ENCODE measurements at regions of chr5 and their contacts with region 1.

Region 1: GRCh38 chr5:150436141-150436680 is 13.3 kb downstream of the RPS14 start:
- DNase-seq: peak; percentile 71
- ATAC-seq: peak; percentile 83
- H3K4me3 ChIP-seq: no peak overlapping the region
- H3K27ac ChIP-seq: no peak overlapping the region
- H3K4me1 ChIP-seq: peaks cover 9% of the 10 kb centered on the region
- H3K27me3 ChIP-seq: no peaks in the 10 kb centered on the region; a peak in 1 of 5 replicates
- CTCF ChIP-seq: peak; percentile 95
- EP300 ChIP-seq: no peak
- POLR2A ChIP-seq: no peak
- RAD21 ChIP-seq: peak; percentile 89

Region 2: DNA sequence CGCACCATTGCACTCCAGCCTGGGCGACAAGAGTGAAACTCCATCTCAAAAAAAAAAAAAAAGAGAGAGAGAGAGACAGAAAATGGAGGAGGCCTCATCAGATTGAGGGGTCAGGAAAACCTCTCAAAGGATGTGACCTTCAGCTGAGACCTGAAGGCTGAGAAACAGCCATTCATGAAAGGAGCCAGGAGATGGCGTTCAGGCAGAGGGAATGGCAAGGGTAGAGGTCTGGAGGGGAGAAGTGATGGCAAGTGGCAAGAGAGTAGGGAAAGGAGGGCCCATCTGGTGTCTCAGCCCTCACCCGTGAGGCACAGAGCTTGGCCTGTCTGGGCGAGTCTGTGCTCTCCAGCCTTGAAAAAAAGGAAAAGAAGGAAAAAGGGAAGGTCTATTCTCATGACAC is 163.7 kb before region 1 on chr5:
- CTCF ChIA-PET with region 1: no interaction called
- POLR2A ChIA-PET with region 1: no interaction called
- in situ Hi-C with region 1: loop called (anchors 5 kb)
- intact Hi-C with region 1: loop called (anchors 5 kb)
- DNase-seq: peak; percentile 55
- ATAC-seq: peak; percentile 86
- H3K4me3 ChIP-seq: no peak overlapping the region
- H3K27ac ChIP-seq: no peak overlapping the region
- H3K4me1 ChIP-seq: peaks cover 21% of the 10 kb centered on the region
- H3K27me3 ChIP-seq: peaks cover 3 to 34% of the 10 kb centered on the region in 2 experiments; a peak in 4 of 5 replicates
- CTCF ChIP-seq: peak; percentile 88
- EP300 ChIP-seq: no peak
- POLR2A ChIP-seq: no peak
- RAD21 ChIP-seq: peak; percentile 70

Region 3: GRCh38 chr5:150357326-150358260 is 78.6 kb before region 1 on chr5 and contains the start of gene TCOF1:
- CTCF ChIA-PET with region 1: no interaction called
- POLR2A ChIA-PET with region 1: interaction called, 3 read pairs
- in situ Hi-C with region 1: no loop called
- intact Hi-C with region 1: loop called (anchors 5 kb)
- DNase-seq: peak; percentile 90
- ATAC-seq: peak; percentile 93
- H3K4me3 ChIP-seq: peak within 1 kb of the TSS; percentile 80 to 100 (median 84)
- H3K27ac ChIP-seq: peak within 1 kb of the TSS; percentile 72
- H3K4me1 ChIP-seq: peaks cover 74% of the 10 kb centered on the region
- H3K27me3 ChIP-seq: no peaks in the 10 kb centered on the region; a peak in 1 of 5 replicates
- CTCF ChIP-seq: no peak
- EP300 ChIP-seq: no peak
- POLR2A ChIP-seq: peak in 1 of 2 experiments; percentile 62; a peak in 3 of 4 replicates
- RAD21 ChIP-seq: peak; percentile 14; the same call in 1 of the 2 replicates
- total RNA-seq, gene TCOF1: 41.6 and 44.5 TPM in 2 replicates

Region 4: GRCh38 chr5:150398722-150399523 is 37.3 kb before region 1 on chr5:
- CTCF ChIA-PET with region 1: interaction called, 27 read pairs
- POLR2A ChIA-PET with region 1: no interaction called
- in situ Hi-C with region 1: loop called (anchors 5 kb)
- intact Hi-C with region 1: loop called (anchors 1 kb)
- DNase-seq: no peak
- ATAC-seq: peak; percentile 71
- H3K4me3 ChIP-seq: no peak overlapping the region
- H3K27ac ChIP-seq: no peak overlapping the region
- H3K4me1 ChIP-seq: no peaks in the 10 kb centered on the region
- H3K27me3 ChIP-seq: no peaks in the 10 kb centered on the region
- CTCF ChIP-seq: no peak
- EP300 ChIP-seq: no peak
- POLR2A ChIP-seq: no peak; a peak in 1 of 4 replicates
- RAD21 ChIP-seq: no peak

Region 5: GRCh38 chr5:150409638-150410523 is 26.3 kb before region 1 on chr5:
- CTCF ChIA-PET with region 1: interaction called, 5 read pairs
- POLR2A ChIA-PET with region 1: interaction called, 6 read pairs
- in situ Hi-C with region 1: no loop called
- intact Hi-C with region 1: loop called (anchors 1 kb)
- DNase-seq: peak; percentile 77
- ATAC-seq: peak; percentile 83
- H3K4me3 ChIP-seq: peak overlapping the region in 1 of 3 experiments; percentile 12; a peak in 1 of 6 replicates
- H3K27ac ChIP-seq: no peak overlapping the region
- H3K4me1 ChIP-seq: peaks cover 38% of the 10 kb centered on the region
- H3K27me3 ChIP-seq: no peaks in the 10 kb centered on the region
- CTCF ChIP-seq: no peak
- EP300 ChIP-seq: no peak
- POLR2A ChIP-seq: no peak
- RAD21 ChIP-seq: no peak

Measured in HepG2 (cell line).